Activated CD4-positive, alpha-beta memory T cell treated with anti-CD3 and anti-CD28 coated beads for 36 hours (primary cell): ENCODE measurements at regions of chr6 and their contacts with region 1.

Region 1: GRCh38 chr6:109009236-109009961 is 85.2 kb downstream of the SESN1 start:
- DNase-seq: peak; percentile 93
- H3K4me3 Mint-ChIP-seq: peak overlapping the region; percentile 94
- H3K27ac Mint-ChIP-seq: peak overlapping the region; percentile 92
- H3K4me1 Mint-ChIP-seq: peaks cover 60% of the 10 kb centered on the region
- H3K27me3 Mint-ChIP-seq: no peaks in the 10 kb centered on the region

Region 2: GRCh38 chr6:108558372-108559096 is 450.9 kb before region 1 on chr6:
- CTCF ChIA-PET with region 1: no interaction called
- POLR2A ChIA-PET with region 1: interaction called, 3 read pairs
- intact Hi-C with region 1: loop called (anchors 2 kb)
- DNase-seq: peak; percentile 97
- H3K4me3 Mint-ChIP-seq: peak overlapping the region; percentile 93
- H3K27ac Mint-ChIP-seq: peak overlapping the region; percentile 96
- H3K4me1 Mint-ChIP-seq: peaks cover 25% of the 10 kb centered on the region
- H3K27me3 Mint-ChIP-seq: no peaks in the 10 kb centered on the region

Region 3: GRCh38 chr6:108947114-108947854 is 62.1 kb before region 1 on chr6:
- CTCF ChIA-PET with region 1: no interaction called
- POLR2A ChIA-PET with region 1: no interaction called
- intact Hi-C with region 1: loop called (anchors 1 kb)
- DNase-seq: no peak
- H3K4me3 Mint-ChIP-seq: no peak overlapping the region
- H3K27ac Mint-ChIP-seq: no peak overlapping the region
- H3K4me1 Mint-ChIP-seq: peaks cover 34% of the 10 kb centered on the region
- H3K27me3 Mint-ChIP-seq: no peaks in the 10 kb centered on the region

Region 4: GRCh38 chr6:109059571-109060021 is 50.2 kb after region 1 on chr6:
- CTCF ChIA-PET with region 1: interaction called, 4 read pairs
- POLR2A ChIA-PET with region 1: no interaction called
- intact Hi-C with region 1: loop called (anchors 1 kb)
- DNase-seq: no peak
- H3K4me3 Mint-ChIP-seq: peak overlapping the region; percentile 31
- H3K27ac Mint-ChIP-seq: peak overlapping the region; percentile 44
- H3K4me1 Mint-ChIP-seq: peaks cover 32% of the 10 kb centered on the region
- H3K27me3 Mint-ChIP-seq: no peaks in the 10 kb centered on the region